ENCODE measurements at regions of chr17 and their contacts with region 1.

Region 1: DNA sequence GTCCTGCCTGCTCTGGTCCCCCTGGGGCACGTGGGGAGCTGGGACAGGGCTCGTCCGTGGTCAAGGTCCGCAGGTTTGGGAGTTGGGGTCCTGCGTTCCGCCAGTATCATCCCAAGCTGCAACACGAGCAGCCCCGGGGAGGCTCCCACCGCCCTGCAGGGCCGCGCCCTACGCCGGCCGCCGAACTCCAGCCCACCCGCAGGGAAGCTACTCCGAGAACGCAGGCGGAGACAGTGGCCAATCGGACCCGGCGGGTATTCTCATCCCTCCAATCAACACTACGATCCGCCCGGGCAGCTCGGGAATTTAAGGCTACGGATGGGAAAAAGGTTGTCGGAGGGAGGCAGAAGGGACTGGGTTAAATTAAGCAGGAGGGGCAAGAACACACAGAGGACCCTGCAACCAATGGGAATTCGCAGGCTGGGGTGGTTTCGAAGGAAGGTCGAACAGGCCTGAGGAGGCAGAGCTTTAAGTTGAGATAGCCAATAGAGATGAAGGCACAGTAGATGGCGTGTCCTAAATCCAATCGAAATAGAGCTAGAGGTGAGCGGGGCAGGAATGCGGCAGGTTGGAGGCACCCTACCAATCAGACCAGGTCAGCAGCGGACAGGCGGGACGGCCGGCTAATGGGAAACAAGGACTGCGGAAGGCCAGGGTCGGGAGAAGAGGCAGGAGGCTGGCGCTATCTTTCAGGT is 626 bp downstream of the SPAG7 start:
- DNase-seq: peak; percentile 80 to 97 (median 90)
- ATAC-seq: peak; percentile 95
- H3K4me3 ChIP-seq: peak overlapping the region; percentile 70
- H3K27ac ChIP-seq: peak overlapping the region; percentile 95
- H3K4me1 ChIP-seq: peaks cover 22 to 23% of the 10 kb centered on the region in 2 experiments
- H3K27me3 ChIP-seq: no peaks in the 10 kb centered on the region
- CTCF ChIP-seq: no peak
- EP300 ChIP-seq: no peak
- POLR2A ChIP-seq: 0 out of 2 replicates have a peak, but pooled peaks have one; percentile 20
- RAD21 ChIP-seq: no peak

Region 2: DNA sequence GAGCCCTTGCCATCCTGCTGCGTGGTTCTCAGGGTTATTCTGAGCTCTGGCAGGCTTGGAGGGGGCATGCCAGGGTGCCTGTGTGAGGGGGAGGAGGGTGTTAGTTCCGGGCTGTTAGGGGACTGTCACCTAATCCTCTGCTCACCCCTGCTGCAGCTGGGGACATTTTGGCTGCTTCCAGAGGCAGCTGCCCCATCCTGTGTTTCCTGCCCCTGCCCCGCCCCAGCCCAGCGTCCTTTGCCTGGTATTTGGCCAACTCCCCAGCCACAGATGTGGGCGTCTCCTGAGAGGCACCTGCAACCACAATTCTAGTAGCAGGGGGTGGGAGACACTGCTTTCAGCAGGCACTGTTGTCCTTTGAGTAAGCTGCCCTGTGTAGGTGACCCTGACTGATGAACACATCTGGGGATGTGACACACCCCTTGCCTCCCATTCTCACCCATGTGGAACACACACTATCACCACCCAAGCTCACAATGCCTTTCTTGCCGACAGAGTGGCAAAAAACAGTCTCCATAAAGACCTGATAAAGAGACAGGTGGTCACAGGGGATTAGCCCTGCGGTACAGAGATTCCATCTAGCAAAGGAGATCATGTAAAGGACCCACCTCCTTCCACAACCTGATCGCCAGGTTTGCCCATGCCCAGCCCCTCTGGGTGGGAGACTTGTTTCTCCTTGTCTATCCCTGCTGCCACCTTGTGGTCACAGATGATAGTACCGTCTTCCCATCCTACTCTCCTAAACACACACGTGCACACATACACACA is 63.8 kb before region 1 on chr17 and contains the start of gene CHRNE:
- CTCF ChIA-PET with region 1: no interaction called
- POLR2A ChIA-PET with region 1: interaction called, 3 read pairs
- in situ Hi-C with region 1: no loop called
- intact Hi-C with region 1: loop called (anchors 10 kb)
- DNase-seq: peak; percentile 43 to 79 (median 64)
- ATAC-seq: peak; percentile 88
- H3K4me3 ChIP-seq: no peak within 1 kb of the TSS
- H3K27ac ChIP-seq: peak within 1 kb of the TSS; percentile 30; the same call in 2 of the 3 replicates
- H3K4me1 ChIP-seq: peaks cover 14 to 26% of the 10 kb centered on the region in 2 experiments
- H3K27me3 ChIP-seq: no peaks in the 10 kb centered on the region; a peak in 1 of 5 replicates
- CTCF ChIP-seq: peak; percentile 67 to 84 (median 68)
- EP300 ChIP-seq: no peak
- POLR2A ChIP-seq: no peak
- RAD21 ChIP-seq: peak in 1 of 2 experiments; percentile 64; a peak in 3 of 4 replicates
- polyA plus RNA-seq, gene CHRNE: not detected

Region 3: DNA sequence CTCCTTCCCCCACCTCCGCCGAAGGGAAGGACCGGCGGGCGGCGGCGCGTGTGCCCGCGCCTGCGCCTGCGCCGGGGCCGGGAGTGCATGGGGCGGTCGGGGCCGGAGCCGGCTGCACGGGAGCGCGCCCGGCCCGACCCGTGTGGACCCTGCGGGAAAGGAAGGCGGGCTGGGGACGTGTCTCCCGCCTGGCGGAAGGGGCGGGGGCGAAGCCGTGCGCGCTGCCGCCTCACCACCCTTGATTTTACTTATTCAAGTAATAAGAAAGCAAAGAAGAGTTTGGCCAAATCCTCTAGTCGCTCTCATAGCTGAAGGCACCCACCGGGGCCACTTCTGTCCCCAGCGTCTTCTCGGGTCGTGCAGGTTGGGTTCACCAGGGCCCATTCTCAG is 18.1 kb before region 1 on chr17:
- CTCF ChIA-PET with region 1: no interaction called
- POLR2A ChIA-PET with region 1: interaction called, 38 read pairs
- in situ Hi-C with region 1: no loop called
- intact Hi-C with region 1: loop called (anchors 1 kb)
- DNase-seq: peak; percentile 59 to 84 (median 74)
- ATAC-seq: peak; percentile 66
- H3K4me3 ChIP-seq: peak overlapping the region; percentile 97
- H3K27ac ChIP-seq: peak overlapping the region; percentile 98
- H3K4me1 ChIP-seq: peaks cover 32 to 57% of the 10 kb centered on the region in 2 experiments
- H3K27me3 ChIP-seq: no peaks in the 10 kb centered on the region
- CTCF ChIP-seq: no peak
- EP300 ChIP-seq: no peak
- POLR2A ChIP-seq: no peak
- RAD21 ChIP-seq: no peak

Measured in K562 (cell line).